Heart left ventricle (tissue), 16 donors: ENCODE measurements at regions of chr11 and their contacts with region 1.

Region 1: DNA sequence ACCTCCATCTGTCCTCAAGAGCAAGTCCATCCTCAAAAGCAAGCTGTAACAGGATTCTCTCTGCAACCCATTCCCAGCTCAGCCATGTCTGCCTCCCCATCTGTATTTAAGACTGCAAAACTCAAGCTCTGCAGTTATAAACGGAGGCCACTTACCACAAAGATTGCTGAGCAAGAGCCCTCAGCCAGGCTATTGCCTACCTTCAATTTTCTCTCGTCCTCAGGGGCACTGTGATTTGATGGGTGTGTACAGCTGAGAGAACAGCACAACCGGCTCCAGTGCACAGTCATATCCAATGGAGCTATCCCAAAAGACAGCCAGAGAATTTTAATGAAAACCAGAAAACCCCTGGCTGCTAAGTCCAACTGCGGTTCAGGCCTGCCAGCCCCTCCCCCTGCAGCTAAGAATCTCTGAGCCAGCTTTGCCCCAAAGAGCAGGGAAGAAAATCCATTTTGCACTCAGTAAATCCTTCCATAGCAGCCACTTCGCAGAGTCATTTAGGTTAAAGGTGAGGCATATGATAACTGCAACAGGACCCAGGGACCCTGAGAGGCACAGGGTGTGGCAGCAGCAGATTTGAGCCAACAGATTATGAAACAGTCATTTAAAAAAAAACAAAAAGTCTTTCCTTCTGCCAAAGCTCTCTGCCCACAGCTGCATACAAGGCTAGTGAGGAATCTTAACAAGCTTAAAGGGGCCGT is 37.6 kb downstream of the RAB30 start:
- DNase-seq: peak in 3 of 5 donors; percentile 26 to 66 (median 32)
- ATAC-seq: peak; percentile 82 to 89 (median 86)
- H3K4me3 ChIP-seq: peak overlapping the region in 11 of 12 donors; percentile 3 to 52 (median 43)
- H3K27ac ChIP-seq: peak overlapping the region; percentile 51 to 87 (median 78)
- H3K4me1 ChIP-seq: peaks cover 3 to 67% (median 51%) of the 10 kb centered on the region in 12 donors
- H3K27me3 ChIP-seq: no peaks in the 10 kb centered on the region
- CTCF ChIP-seq: no peak
- POLR2A ChIP-seq: no peak

Region 2: DNA sequence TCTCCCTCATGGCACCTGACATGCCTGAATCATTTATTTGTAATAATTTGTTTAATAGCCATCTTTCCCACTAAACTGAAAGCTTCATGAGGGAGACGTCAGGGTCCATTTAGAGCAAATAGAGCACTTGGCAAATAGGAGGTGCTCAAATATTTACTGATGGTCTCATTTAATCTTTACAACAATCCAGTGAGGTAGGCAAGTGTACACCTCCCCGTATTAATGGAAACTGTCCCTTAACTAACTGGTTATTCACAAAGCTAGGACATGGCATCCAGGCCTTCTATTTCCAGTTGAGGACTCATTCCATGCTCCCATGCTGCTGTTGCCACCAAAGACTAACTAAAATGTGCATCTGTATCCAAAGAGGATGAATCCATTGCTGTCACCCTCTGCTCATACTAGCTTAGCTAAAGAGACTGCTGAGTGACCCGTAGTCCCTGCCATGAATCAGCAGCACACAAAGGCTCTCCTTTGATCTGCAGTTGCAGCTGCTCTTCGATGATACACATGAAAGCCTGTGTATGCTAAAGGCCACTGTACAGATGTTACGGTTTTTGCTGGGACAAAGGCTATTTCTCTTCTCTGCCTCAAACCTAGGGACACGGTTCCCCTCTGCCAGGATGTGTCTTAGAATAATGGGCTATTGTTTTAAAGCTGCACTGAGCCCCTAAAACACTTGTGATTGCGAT is 45.0 kb before region 1 on chr11:
- intact Hi-C with region 1: loop called in 1 of 10 experiments (anchors 5 kb)
- DNase-seq: no peak
- ATAC-seq: peak in 1 of 4 donors; percentile 8
- H3K4me3 ChIP-seq: no peak overlapping the region
- H3K27ac ChIP-seq: peak overlapping the region in 1 of 12 donors; percentile 11
- H3K4me1 ChIP-seq: peaks cover 0 to 52% (median 14%) of the 10 kb centered on the region in 12 donors
- H3K27me3 ChIP-seq: no peaks in the 10 kb centered on the region
- CTCF ChIP-seq: no peak
- POLR2A ChIP-seq: no peak